ENCODE measurements at regions of chr1 and their contacts with region 1.

Region 1: GRCh38 chr1:211514030-211514754 is 22.2 kb upstream of the RD3 start:
- DNase-seq: peak; percentile 74 to 90
- H3K4me3 ChIP-seq: no peak overlapping the region
- H3K27ac ChIP-seq: no peak overlapping the region
- H3K4me1 ChIP-seq: peaks cover 0 to 8% (median 3%) of the 10 kb centered on the region in 4 experiments; a peak in 5 of 7 replicates
- H3K27me3 ChIP-seq: peaks cover 0 to 15% (median 10%) of the 10 kb centered on the region in 4 experiments; a peak in 5 of 7 replicates
- CTCF ChIP-seq: peak; percentile 91
- EP300 ChIP-seq: no peak
- POLR2A ChIP-seq: no peak
- RAD21 ChIP-seq: peak; percentile 93 to 94

Region 2: DNA sequence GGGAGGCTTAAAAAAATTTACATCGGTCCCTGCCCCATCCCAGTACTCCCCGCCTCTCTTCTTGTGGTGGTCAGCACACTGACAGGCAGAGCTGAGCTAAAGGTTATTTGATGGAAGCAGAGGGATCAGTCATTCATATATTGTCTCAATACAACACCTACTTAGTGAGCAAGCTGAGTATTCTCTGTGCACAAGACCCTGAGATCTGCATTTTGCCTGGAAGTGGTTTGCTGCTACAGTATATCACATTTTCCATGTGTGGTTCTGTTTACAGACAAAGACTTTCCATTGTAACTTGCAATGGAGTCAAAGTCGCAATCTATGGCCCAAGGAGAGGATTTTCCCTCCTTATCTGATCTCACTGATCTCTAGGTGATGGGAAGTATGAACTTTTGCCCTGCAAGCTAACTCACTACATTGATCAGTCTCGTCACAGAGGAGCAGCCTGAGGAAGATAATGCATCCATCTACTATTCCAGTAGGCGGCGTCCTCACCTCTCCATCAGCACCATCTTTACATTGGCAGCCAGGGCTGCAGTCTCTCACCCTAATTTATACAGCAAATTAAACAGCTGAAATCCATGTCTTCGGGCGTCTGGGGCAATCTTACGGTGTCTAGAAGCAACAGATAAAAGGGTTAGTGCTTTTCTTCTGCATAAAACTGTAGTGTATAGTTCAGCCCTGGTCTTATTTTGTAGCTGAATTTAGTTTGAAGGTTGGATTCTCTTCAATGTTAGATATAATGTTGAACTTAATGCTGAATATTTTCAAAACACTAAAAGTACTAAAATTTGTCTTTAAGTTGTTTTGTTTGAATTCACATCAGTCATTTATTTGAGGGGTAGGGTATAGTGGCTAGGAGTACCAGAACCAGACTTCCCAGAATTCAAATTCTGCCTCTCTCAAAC is 190.8 kb before region 1 on chr1:
- CTCF ChIA-PET with region 1: interaction called, 38 read pairs
- POLR2A ChIA-PET with region 1: interaction called, 3 read pairs
- DNase-seq: peak in 1 of 2 experiments; percentile 59
- H3K4me3 ChIP-seq: no peak overlapping the region
- H3K27ac ChIP-seq: no peak overlapping the region
- H3K4me1 ChIP-seq: peaks cover 2 to 15% (median 7%) of the 10 kb centered on the region in 4 experiments; a peak in 6 of 7 replicates
- H3K27me3 ChIP-seq: peaks cover 0 to 7% (median 4%) of the 10 kb centered on the region in 4 experiments; a peak in 4 of 7 replicates
- CTCF ChIP-seq: peak; percentile 66 to 95 (median 91)
- EP300 ChIP-seq: no peak
- POLR2A ChIP-seq: no peak
- RAD21 ChIP-seq: peak; percentile 95

Region 3: GRCh38 chr1:211469938-211470529 is 44.2 kb before region 1 on chr1:
- CTCF ChIA-PET with region 1: interaction called, 52 read pairs
- POLR2A ChIA-PET with region 1: no interaction called
- DNase-seq: peak; percentile 81 to 92
- H3K4me3 ChIP-seq: no peak overlapping the region
- H3K27ac ChIP-seq: no peak overlapping the region
- H3K4me1 ChIP-seq: peaks cover 0 to 5% (median 2%) of the 10 kb centered on the region in 4 experiments; a peak in 4 of 7 replicates
- H3K27me3 ChIP-seq: no peaks in the 10 kb centered on the region
- CTCF ChIP-seq: peak; percentile 79 to 87 (median 81)
- EP300 ChIP-seq: no peak; a peak in 1 of 3 replicates
- POLR2A ChIP-seq: no peak
- RAD21 ChIP-seq: peak; percentile 49 to 71

Region 4: GRCh38 chr1:211484755-211485479 is 29.3 kb before region 1 on chr1:
- CTCF ChIA-PET with region 1: interaction called, 79 read pairs
- POLR2A ChIA-PET with region 1: interaction called, 3 read pairs
- DNase-seq: no peak
- H3K4me3 ChIP-seq: no peak overlapping the region
- H3K27ac ChIP-seq: no peak overlapping the region
- H3K4me1 ChIP-seq: peaks cover 0 to 5% (median under 1%) of the 10 kb centered on the region in 4 experiments; a peak in 2 of 7 replicates
- H3K27me3 ChIP-seq: no peaks in the 10 kb centered on the region
- CTCF ChIP-seq: no peak
- EP300 ChIP-seq: no peak
- POLR2A ChIP-seq: no peak
- RAD21 ChIP-seq: no peak

Region 5: DNA sequence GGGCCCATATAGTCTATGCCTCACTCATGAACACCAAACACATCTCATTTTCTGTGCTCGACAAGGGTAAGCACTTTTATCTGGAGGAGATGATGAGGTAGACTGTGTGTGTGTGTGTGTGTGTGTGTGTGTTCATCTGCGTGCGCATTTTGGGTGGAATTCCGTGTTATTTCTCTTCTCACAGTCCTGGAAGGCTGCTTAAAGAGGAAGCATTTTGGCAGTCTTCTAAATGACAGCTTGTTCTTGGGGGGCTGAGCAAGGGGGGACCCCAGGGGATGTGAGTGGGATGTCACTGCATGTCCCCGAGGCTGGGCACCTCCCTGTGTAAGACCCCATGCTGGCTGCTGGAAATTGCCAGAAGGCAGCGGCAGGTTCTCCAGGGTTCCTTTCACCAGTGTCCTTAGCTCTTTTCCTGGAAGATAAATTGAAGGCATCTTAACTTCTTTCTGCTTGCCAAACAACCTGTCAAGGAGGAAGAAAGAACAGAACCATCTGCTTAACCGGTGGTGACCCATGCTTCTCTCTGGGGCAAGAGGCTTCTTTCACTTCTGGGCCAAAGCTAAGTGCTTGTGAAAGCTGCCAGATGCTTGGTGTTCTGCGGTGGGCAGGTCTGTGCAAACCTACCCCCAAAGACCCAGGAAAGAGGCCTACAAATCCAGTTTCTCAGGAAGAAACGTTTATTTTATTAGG is 12.3 kb before region 1 on chr1:
- CTCF ChIA-PET with region 1: interaction called, 79 read pairs
- POLR2A ChIA-PET with region 1: no interaction called
- DNase-seq: no peak
- H3K4me3 ChIP-seq: no peak overlapping the region
- H3K27ac ChIP-seq: no peak overlapping the region
- H3K4me1 ChIP-seq: no peaks in the 10 kb centered on the region
- H3K27me3 ChIP-seq: no peaks in the 10 kb centered on the region
- CTCF ChIP-seq: no peak
- EP300 ChIP-seq: no peak
- POLR2A ChIP-seq: no peak
- RAD21 ChIP-seq: no peak

Region 6: GRCh38 chr1:211541720-211542453 is 27.7 kb after region 1 on chr1:
- CTCF ChIA-PET with region 1: interaction called, 10 read pairs
- POLR2A ChIA-PET with region 1: no interaction called
- DNase-seq: no peak
- H3K4me3 ChIP-seq: no peak overlapping the region
- H3K27ac ChIP-seq: no peak overlapping the region
- H3K4me1 ChIP-seq: peaks cover 0 to 9% (median 4%) of the 10 kb centered on the region in 4 experiments; a peak in 5 of 7 replicates
- H3K27me3 ChIP-seq: no peaks in the 10 kb centered on the region
- CTCF ChIP-seq: no peak
- EP300 ChIP-seq: no peak
- POLR2A ChIP-seq: no peak
- RAD21 ChIP-seq: no peak

Region 7: GRCh38 chr1:211654838-211655787 is 140.9 kb after region 1 on chr1:
- CTCF ChIA-PET with region 1: interaction called, 154 read pairs
- POLR2A ChIA-PET with region 1: interaction called, 3 read pairs
- DNase-seq: peak; percentile 67 to 96
- H3K4me3 ChIP-seq: no peak overlapping the region
- H3K27ac ChIP-seq: no peak overlapping the region
- H3K4me1 ChIP-seq: peaks cover 0 to 4% (median 0%) of the 10 kb centered on the region in 4 experiments; a peak in 3 of 7 replicates
- H3K27me3 ChIP-seq: no peaks in the 10 kb centered on the region
- CTCF ChIP-seq: peak; percentile 88 to 95 (median 90)
- EP300 ChIP-seq: no peak
- POLR2A ChIP-seq: no peak
- RAD21 ChIP-seq: peak; percentile 97 to 99

Region 8: DNA sequence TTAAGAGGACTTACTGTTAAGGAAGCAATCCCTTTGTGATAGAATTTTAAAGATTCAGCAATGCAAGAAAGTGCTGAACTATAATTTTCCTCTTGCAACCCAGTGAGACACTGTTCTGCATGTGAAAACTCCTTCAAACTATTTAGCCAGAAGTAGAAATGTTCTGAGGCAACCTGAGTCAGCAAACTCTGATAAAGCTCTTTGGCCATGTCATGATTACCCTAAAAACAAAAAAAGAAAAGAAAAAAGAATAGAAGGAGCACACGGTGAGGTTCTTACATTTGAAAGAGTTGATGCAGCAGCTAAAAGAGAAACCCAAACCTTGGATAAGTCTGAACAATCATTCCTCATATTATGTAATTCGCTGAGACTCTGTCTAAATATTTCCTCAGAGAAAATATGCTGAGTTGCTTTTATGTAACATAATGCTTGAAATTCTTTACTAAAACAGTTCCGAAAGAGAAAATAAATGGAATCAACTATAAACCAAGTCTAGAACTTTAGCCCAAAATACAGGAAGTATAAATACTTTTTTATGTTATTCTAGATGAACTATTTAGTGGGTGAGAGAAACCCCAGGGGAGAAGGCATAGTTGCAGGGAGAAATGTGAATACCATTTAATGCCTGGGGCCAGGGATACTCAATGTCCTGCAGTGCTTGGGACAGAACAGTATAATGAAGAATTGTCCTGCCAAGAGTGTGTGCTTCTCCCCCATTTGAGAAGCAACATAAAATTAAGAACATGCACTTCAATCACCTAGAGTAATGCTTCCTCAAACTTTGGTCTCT is 461.2 kb after region 1 on chr1:
- CTCF ChIA-PET with region 1: no interaction called
- POLR2A ChIA-PET with region 1: no interaction called
- DNase-seq: no peak
- H3K4me3 ChIP-seq: no peak overlapping the region
- H3K27ac ChIP-seq: no peak overlapping the region
- H3K4me1 ChIP-seq: peaks cover 0 to 4% (median 0%) of the 10 kb centered on the region in 4 experiments; a peak in 1 of 7 replicates
- H3K27me3 ChIP-seq: no peaks in the 10 kb centered on the region
- CTCF ChIP-seq: no peak
- EP300 ChIP-seq: no peak
- POLR2A ChIP-seq: no peak
- RAD21 ChIP-seq: no peak